IMR-90 (cell line): ENCODE measurements at regions of chr6 and their contacts with region 1.

Region 1: DNA sequence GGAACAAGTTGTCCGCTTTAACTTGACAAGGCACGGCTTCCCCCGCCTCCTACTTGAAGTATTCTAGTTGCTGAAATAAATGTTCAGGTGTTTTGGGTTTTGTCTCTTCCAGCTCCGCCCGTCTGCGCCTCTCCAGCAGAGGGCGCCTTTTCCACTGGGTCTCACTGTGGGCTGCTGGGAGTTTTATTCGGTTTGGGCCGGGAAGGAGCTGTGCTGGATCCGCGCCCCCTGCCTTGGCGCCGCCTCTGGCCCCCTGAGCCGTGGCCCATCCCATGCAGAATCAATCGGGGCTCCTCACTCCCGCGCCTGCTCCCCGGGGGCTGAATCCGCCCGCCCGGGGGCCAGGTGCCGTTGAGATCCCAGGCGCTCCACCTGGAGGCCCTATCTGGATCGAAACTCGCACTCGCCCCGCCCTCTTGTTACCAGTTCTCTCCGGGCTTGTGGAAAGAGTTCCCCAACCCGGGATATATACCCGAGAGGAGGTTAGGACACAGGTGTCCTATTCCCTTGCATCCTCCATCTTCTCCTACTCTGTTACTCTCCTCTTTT is 51.0 kb upstream of the TCF21 start:
- DNase-seq: no peak
- ATAC-seq: no peak
- H3K4me3 ChIP-seq: no peak overlapping the region
- H3K27ac ChIP-seq: no peak overlapping the region
- H3K4me1 ChIP-seq: peaks cover 8% of the 10 kb centered on the region
- H3K27me3 ChIP-seq: no peaks in the 10 kb centered on the region
- CTCF ChIP-seq: peak; percentile 30; the same call in 1 of the 2 replicates
- POLR2A ChIP-seq: no peak
- RAD21 ChIP-seq: peak; percentile 30

Region 2: DNA sequence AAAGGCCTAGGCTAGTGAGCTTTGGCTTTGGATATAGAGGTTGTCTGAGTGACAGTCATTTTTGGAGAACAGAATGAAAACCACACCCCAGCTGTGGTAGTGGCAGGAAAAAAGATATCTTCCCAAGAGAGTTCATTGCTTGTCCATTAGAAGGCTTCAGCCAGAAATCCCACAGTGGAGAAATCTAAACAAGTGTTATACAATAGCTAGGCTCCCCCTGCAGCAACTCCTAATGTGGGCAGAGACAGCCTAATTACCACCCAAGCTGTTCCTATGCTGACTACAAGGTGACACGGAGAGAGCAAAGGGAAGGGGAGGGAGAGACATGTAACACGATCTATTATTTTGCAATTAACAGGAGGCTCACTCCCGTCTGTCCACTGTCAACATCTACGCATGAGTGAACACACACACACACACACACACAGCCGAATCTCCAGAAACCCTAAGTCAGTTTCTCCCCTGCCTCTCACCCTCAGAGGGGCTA is 96.5 kb before region 1 on chr6:
- CTCF ChIA-PET with region 1: no interaction called
- POLR2A ChIA-PET with region 1: no interaction called
- dilution Hi-C with region 1: no loop called
- in situ Hi-C with region 1: no loop called
- intact Hi-C with region 1: loop called (anchors 10 kb)
- DNase-seq: peak; percentile 13
- ATAC-seq: peak; percentile 37
- H3K4me3 ChIP-seq: no peak overlapping the region
- H3K27ac ChIP-seq: peak overlapping the region; percentile 28; the same call in 1 of the 2 replicates
- H3K4me1 ChIP-seq: peaks cover 3% of the 10 kb centered on the region
- H3K27me3 ChIP-seq: no peaks in the 10 kb centered on the region
- CTCF ChIP-seq: no peak
- POLR2A ChIP-seq: no peak
- RAD21 ChIP-seq: no peak

Region 3: DNA sequence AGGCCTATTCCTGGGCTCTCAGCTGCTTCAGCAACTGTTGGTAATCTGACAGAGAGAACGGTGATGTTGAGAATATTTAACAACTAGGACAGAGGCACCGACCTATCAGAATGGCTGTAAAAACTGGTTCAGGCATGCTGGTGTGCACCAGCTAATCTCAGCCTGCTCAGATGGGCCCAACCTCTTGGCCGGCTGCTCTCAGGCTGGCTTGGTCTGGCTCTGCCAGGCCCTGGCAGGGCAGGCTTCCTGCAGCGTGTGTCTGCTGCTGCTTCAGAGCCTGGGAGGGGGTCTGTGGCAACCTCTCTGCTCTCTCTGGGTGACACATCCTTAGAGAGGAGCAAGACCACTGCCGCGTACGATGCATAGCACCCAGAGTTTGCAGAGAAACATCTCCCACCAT is 209.8 kb after region 1 on chr6:
- CTCF ChIA-PET with region 1: no interaction called
- POLR2A ChIA-PET with region 1: no interaction called
- dilution Hi-C with region 1: no loop called
- in situ Hi-C with region 1: no loop called
- intact Hi-C with region 1: no loop called
- DNase-seq: no peak
- ATAC-seq: no peak
- H3K4me3 ChIP-seq: no peak overlapping the region
- H3K27ac ChIP-seq: no peak overlapping the region
- H3K4me1 ChIP-seq: no peaks in the 10 kb centered on the region
- H3K27me3 ChIP-seq: no peaks in the 10 kb centered on the region
- CTCF ChIP-seq: no peak
- POLR2A ChIP-seq: no peak
- RAD21 ChIP-seq: no peak